ENCODE measurements at regions of chr10 and their contacts with region 1.

Region 1: DNA sequence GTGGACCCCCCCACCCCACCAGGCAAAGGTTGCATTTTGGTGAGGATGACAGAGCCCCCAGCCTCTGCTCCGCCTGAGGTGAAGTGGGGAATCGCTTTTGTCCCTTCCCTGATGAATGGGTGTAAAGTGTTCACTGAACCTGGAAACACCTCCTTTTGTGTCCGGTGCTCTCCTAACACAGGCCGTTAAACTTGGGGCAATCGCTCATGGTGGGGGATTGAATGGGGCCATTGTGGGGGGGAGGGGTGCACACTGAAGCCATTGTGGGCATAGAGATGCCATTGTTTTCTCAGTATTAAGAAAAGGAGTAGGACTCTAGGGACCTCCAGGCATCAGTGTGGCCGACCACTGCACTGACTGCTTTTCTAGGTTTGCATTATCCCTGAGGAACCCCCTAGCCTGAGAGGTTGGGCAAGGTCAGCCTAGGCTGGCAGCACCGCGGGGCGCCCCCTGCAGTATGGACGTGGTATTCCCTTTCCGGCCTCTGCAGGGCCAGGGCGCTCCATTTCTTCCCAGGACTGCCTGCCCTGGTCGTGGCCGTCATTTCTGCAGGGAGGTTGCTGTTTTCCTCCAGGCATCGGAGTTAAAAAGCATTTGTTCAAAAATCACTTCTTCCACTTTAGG is 158.3 kb downstream of the TCF7L2 start:
- DNase-seq: no peak
- H3K4me3 ChIP-seq: no peak overlapping the region
- H3K27ac ChIP-seq: peak overlapping the region in 1 of 2 donors; percentile 77
- H3K4me1 ChIP-seq: peaks cover 6 to 35% of the 10 kb centered on the region in 2 donors
- H3K27me3 ChIP-seq: no peaks in the 10 kb centered on the region
- CTCF ChIP-seq: peak in 2 of 3 experiments; percentile 37 to 48

Region 2: DNA sequence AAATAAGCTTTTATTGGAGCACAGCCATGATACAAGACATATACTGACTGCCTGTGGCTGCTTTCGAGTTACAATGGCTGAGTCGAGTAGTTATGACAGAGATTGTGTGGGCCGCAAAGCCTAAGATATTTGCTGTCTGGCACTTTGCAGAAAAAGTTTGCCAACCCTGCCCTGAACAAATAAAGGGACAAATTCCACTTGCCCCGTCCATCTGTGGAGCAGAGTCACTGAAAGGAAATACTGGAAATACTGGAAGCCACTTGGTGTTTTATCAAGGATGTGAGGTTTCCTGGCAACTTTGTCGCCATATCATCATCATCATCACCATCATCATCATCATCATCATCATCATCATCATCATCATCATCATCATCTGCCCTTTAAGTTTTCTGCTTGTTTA is 72.5 kb before region 1 on chr10:
- intact Hi-C with region 1: loop called (anchors 5 kb)
- DNase-seq: peak in 1 of 2 donors; percentile 72
- H3K4me3 ChIP-seq: no peak overlapping the region
- H3K27ac ChIP-seq: peak overlapping the region; percentile 63 to 82
- H3K4me1 ChIP-seq: peaks cover 8 to 36% of the 10 kb centered on the region in 2 donors
- H3K27me3 ChIP-seq: no peaks in the 10 kb centered on the region
- CTCF ChIP-seq: no peak

Region 3: GRCh38 chr10:113073549-113074189 is 34.7 kb before region 1 on chr10:
- intact Hi-C with region 1: loop called (anchors 5 kb)
- DNase-seq: peak; percentile 69 to 96
- H3K4me3 ChIP-seq: peak overlapping the region in 1 of 2 donors; percentile 19
- H3K27ac ChIP-seq: peak overlapping the region; percentile 83 to 87
- H3K4me1 ChIP-seq: peaks cover 11 to 36% of the 10 kb centered on the region in 2 donors
- H3K27me3 ChIP-seq: no peaks in the 10 kb centered on the region
- CTCF ChIP-seq: no peak

Region 4: DNA sequence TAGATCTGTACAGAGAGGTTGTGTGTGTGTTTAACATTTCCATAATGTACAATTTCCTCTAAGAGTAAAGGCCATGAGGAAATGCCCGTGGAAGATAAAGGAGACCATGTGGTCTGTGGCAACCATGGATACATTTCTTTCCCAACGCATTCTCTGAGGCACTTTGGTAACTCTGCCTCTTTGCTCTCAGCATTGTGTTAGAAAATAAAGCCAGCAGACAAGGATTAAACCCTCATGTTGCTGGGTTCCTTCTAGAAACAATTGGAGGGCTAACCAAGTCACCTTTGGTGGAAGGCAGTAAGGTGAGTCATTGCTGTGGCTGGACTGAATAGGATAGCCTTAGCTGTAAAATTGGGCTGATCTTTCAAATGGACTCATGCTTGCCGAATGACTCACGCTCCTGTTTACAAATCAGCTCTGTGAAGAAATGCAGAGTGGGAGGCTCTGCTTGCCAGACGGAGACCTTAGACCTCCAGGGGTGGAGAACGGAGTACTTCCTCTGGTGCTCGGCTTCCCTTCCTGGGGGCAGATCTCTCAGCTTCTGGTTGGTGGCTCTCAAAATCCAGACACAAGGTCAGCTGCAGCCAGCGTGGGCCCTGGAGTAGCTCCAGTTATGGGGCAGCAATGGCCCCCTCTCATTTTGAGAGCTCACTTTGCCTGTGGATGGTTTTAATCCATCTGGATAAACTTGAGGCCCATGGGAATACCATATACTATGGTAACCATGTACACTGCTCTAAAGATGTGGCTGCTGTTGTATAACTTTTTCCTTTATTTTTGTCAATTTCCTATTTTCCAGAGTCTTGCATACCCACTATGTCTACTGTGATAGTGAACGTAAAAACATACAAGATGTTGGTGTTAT is 20.9 kb before region 1 on chr10:
- intact Hi-C with region 1: loop called (anchors 2 kb)
- DNase-seq: peak; percentile 28 to 91
- H3K4me3 ChIP-seq: no peak overlapping the region
- H3K27ac ChIP-seq: peak overlapping the region; percentile 16 to 66
- H3K4me1 ChIP-seq: peaks cover 0 to 22% of the 10 kb centered on the region in 2 donors
- H3K27me3 ChIP-seq: no peaks in the 10 kb centered on the region
- CTCF ChIP-seq: no peak

Region 5: GRCh38 chr10:113202018-113202417 is 93.7 kb after region 1 on chr10:
- intact Hi-C with region 1: no loop called
- DNase-seq: no peak
- H3K4me3 ChIP-seq: no peak overlapping the region
- H3K27ac ChIP-seq: no peak overlapping the region
- H3K4me1 ChIP-seq: no peaks in the 10 kb centered on the region
- H3K27me3 ChIP-seq: no peaks in the 10 kb centered on the region
- CTCF ChIP-seq: no peak